A673 (cell line): ENCODE measurements at regions of chr16 and their contacts with region 1.

Region 1: GRCh38 chr16:71610936-71611871 is 14.8 kb upstream of the MARVELD3 start:
- DNase-seq: peak; percentile 81
- H3K4me3 ChIP-seq: no peak overlapping the region
- H3K27ac ChIP-seq: no peak overlapping the region
- H3K4me1 ChIP-seq: no peaks in the 10 kb centered on the region
- H3K27me3 ChIP-seq: no peaks in the 10 kb centered on the region
- CTCF ChIP-seq: peak; percentile 92

Region 2: GRCh38 chr16:71412270-71413160 is 198.7 kb before region 1 on chr16:
- CTCF ChIA-PET with region 1: interaction called, 3 read pairs
- POLR2A ChIA-PET with region 1: no interaction called
- intact Hi-C with region 1: loop called (anchors 5 kb)
- DNase-seq: peak; percentile 83
- H3K4me3 ChIP-seq: no peak overlapping the region
- H3K27ac ChIP-seq: no peak overlapping the region
- H3K4me1 ChIP-seq: no peaks in the 10 kb centered on the region
- H3K27me3 ChIP-seq: peaks cover 44% of the 10 kb centered on the region
- CTCF ChIP-seq: peak; percentile 84

Region 3: GRCh38 chr16:71564155-71564967 is 46.8 kb before region 1 on chr16:
- CTCF ChIA-PET with region 1: interaction called, 11 read pairs
- POLR2A ChIA-PET with region 1: no interaction called
- intact Hi-C with region 1: no loop called
- DNase-seq: no peak
- H3K4me3 ChIP-seq: peak overlapping the region; percentile 55
- H3K27ac ChIP-seq: no peak overlapping the region
- H3K4me1 ChIP-seq: peaks cover 10% of the 10 kb centered on the region
- H3K27me3 ChIP-seq: no peaks in the 10 kb centered on the region
- CTCF ChIP-seq: no peak

Region 4: DNA sequence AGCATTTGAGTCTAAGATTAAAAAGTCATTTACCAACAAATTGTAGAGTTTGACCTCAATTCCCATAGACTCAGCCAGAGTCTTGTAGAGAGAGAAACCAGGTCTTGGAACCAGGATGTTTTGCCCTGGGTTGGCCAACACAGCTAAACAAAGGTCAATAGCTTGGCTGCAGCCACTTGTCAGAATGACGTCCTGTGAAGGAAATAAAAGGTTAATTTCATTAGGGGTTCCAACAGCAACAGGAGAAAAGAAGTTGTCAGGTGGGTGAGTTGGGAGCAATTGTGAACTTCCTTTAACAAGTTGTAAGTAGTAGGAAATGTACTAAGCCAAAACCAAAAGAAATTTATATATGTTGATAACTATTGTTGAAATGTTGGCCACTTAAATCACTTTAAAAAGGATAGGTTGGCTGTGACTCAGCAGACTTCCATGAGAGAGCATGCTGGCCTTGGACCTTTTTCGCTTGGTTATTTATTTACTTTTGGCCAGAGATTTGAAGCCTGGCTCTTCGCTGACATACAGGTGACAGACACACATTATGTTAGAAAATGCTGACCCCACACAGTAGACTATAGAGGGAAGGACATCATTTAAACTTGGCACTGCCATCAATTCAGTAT is 38.6 kb before region 1 on chr16:
- CTCF ChIA-PET with region 1: no interaction called
- POLR2A ChIA-PET with region 1: no interaction called
- intact Hi-C with region 1: loop called (anchors 5 kb)
- DNase-seq: no peak
- H3K4me3 ChIP-seq: no peak overlapping the region
- H3K27ac ChIP-seq: no peak overlapping the region
- H3K4me1 ChIP-seq: no peaks in the 10 kb centered on the region
- H3K27me3 ChIP-seq: peaks cover 30% of the 10 kb centered on the region
- CTCF ChIP-seq: no peak

Region 5: DNA sequence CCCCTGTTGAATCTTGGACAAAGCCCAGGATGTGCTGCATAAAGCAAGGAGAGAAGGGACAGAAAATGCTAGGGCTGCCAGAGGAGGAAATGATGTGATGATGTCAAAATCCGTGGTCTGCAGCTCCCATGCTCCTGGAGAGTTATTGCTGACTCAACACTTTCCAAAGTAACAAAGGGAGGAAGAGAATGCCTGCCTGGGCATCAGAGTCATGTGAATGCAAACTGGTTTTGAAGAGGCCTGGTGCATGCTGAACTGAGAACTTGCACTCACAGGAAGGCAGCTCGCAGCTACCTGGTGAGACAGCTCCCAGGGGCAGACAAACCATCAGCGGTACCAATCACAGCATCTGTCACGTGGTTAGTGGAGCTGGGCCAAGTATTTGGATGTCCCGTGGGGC is 17.6 kb after region 1 on chr16:
- CTCF ChIA-PET with region 1: interaction called, 16 read pairs
- POLR2A ChIA-PET with region 1: no interaction called
- intact Hi-C with region 1: no loop called
- DNase-seq: peak; percentile 85
- H3K4me3 ChIP-seq: no peak overlapping the region
- H3K27ac ChIP-seq: peak overlapping the region; percentile 18
- H3K4me1 ChIP-seq: peaks cover 17% of the 10 kb centered on the region
- H3K27me3 ChIP-seq: no peaks in the 10 kb centered on the region
- CTCF ChIP-seq: no peak